HEK293 (cell line): ENCODE measurements at regions of chr16 and their contacts with region 1.

Region 1: DNA sequence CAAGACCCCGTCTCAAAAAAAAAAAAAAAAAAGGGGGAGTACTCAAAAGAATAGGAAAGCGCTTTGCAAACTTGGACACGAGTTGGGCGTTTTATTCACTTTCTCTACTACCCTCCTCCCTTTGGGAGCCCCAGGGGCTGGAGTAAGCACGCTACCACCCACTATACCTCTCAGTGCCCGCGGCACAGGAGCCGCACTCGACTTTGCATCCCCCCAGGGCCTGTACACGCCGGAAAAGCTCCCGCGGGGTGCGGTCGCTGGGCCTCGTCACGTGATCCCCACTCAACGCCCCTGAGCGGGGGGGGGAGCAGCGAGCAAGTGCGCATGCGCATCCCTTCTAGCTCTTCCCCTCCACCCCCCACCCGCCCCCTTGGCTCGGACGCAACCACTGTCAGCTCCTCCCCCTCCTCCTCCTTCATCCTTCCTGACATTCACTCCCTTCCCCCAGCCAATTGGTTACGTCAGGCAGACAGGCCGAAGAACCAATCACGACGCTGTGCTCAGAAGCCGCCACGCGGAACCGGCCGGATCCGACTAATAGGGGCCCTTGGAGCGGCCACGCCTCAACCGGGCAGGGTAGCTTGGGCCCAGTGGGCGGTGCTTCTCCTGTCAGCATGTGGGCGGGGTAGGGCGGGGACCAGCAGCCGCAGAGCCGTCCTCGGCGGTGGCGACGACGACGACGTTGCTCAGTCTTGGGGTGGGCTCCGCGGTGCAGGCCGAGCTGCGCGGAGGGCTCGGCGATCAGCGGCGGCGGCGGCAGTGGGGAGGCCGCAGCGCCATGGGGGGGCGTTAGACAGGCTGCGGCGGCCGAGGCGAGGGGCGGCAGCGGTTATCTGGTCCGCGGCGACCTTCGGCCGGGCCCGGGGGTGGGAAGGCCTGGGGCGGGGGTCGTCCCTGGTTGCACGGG is at the start of gene HAPSTR1:
- H3K4me3 ChIP-seq: peak within 1 kb of the TSS; percentile 99
- H3K27ac ChIP-seq: peak within 1 kb of the TSS; percentile 89
- H3K4me1 ChIP-seq: peaks cover 9% of the 10 kb centered on the region
- CTCF ChIP-seq: no peak

Region 2: DNA sequence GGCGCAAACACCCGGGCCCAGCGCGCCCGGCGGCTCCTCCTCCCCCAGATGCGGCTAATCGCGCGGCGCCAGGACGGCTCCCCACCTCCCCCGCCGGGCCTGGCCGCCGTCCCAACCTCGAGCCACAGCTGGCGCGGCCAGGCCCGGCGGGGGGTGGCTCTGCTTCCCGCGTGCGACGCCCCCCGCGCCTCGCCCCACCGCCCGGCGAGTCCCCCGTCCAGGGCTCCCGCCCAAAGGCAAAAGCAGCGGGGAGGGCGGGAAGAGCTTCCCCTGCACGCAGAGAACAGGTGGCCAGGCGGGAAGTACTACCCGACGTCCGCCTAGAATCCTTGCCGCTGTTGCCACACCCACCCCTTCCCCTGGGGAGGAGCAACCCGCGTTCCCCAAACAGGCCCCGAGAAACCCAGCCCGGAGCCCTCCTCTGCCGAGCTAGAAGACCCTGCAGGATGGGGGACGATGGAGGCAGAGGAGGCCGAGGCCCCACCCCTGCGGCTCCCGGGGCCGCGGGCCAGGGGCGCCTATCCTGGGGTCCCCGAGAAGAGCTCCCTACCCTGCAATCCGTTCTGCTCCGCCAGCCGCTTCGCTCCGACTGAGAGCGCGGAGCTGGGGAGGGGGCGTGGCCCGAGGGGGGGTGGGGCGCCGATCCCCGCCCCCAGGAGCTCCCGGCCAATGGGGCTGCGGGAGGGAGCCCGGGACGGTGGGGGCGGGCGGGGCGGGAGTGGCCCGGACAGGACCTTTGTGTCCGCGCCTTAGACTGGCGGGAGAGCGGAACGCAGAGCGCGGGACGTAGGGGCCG is 222.6 kb before region 1 on chr16 and contains the start of gene CARHSP1:
- CTCF ChIA-PET with region 1: no interaction called
- POLR2A ChIA-PET with region 1: interaction called, 12 read pairs
- H3K4me3 ChIP-seq: peak within 1 kb of the TSS; percentile 75
- H3K27ac ChIP-seq: peak within 1 kb of the TSS; percentile 90
- H3K4me1 ChIP-seq: peaks cover 11% of the 10 kb centered on the region
- CTCF ChIP-seq: no peak

Region 3: DNA sequence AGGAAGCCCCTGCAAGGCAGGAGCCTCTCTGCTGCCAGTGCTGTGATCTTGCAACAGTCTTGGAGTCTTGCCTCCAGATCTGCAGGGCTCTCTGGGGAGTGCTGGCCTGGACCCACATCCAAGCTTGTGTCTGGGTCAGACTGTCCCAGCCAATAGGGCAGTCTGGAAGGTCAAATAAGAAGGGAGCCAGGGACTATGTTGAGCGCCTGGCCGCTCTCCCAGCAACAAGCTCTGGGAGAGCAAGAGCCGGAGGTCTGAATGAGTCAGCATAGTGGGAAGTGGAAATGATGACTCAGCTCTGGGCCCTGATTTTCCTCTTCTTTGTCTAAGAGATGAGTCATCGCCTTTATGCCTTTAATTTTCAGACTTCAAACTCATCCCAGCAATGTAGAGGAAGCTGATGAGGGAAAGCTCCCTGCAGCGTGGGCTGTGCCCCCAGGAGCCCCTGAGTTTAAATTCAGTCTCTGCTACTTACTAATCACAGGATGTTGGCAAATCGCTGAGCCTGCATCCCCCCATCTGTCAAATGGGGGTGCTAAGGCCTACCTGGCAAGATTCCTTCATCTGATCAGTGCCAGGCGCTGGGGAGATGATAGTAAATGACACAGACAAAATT is 43.4 kb before region 1 on chr16:
- CTCF ChIA-PET with region 1: interaction called, 8 read pairs
- POLR2A ChIA-PET with region 1: interaction called, 11 read pairs
- H3K4me3 ChIP-seq: no peak overlapping the region
- H3K27ac ChIP-seq: no peak overlapping the region; the same call in 1 of the 2 replicates
- H3K4me1 ChIP-seq: peaks cover 6% of the 10 kb centered on the region
- CTCF ChIP-seq: no peak

Region 4: DNA sequence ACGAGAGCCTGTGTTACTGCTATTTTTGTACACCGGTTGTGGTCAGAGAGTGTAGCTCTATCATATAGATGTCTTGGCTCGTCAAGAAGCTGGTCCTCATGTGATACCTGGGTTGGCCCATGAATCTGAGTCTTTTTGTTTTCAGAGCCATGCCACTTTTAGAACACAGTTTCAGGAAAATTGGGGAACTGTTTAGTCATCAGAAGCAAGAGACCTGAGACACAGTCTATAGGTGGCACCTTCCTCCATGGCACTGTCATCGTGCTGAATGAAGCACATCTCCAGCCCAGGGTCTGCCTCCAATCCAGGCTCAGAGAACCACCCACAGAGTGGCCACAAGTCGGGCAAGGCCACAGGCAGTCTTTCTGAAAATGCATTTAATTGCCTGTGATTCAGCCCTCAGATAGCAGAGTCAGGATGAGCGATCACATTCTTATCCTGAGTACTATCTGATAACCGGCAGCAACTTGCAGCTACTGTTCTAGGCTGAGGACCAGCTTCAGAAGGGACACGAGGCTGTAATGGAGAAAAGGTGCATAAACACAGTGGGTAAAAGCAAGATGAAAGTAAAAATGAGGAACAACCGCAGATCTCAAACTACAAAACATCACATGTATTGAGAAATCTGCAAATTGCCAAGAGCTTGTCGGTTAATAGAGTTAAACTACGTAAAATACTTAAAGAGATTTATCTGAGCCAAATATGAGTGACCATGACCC is 14.0 kb before region 1 on chr16:
- CTCF ChIA-PET with region 1: no interaction called
- POLR2A ChIA-PET with region 1: interaction called, 76 read pairs
- H3K4me3 ChIP-seq: no peak overlapping the region
- H3K27ac ChIP-seq: no peak overlapping the region
- H3K4me1 ChIP-seq: no peaks in the 10 kb centered on the region
- CTCF ChIP-seq: no peak

Region 5: DNA sequence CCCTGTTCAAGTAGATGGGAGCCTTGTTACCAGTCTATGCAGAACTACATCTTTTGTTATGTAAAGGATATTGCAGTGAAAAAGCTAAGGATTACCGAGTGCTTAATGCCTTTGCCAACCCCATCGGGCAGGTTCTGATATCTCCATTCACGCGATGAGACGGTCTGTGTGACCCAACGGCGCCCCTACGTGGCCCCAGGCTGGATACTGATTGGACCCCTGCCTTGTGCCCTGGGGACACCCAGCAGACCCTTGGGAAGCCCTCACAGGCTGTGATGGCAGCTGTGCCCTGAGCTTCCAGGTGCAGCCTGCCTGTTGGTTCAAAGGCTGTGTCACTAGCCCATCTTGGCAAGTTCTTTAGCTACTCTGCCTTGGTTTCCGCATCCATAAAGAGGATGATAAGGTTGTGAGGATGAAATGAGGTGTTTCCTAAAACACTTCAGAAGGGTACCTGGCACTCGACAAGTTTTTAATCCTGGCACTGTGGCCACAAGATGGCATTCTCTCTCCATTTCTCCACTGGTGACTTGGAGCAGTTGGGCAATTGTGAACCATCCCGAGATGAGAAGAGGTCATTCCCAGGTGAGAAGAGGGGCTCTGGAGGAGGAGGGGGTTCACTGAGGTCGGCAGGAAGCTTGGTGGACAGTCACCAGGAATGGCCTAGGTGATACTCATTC is 33.8 kb after region 1 on chr16:
- CTCF ChIA-PET with region 1: no interaction called
- POLR2A ChIA-PET with region 1: interaction called, 12 read pairs
- H3K4me3 ChIP-seq: no peak overlapping the region
- H3K27ac ChIP-seq: no peak overlapping the region
- H3K4me1 ChIP-seq: no peaks in the 10 kb centered on the region
- CTCF ChIP-seq: no peak

Region 6: GRCh38 chr16:9159839-9160550 is 68.8 kb after region 1 on chr16:
- CTCF ChIA-PET with region 1: no interaction called
- POLR2A ChIA-PET with region 1: no interaction called
- H3K4me3 ChIP-seq: no peak overlapping the region
- H3K27ac ChIP-seq: no peak overlapping the region
- H3K4me1 ChIP-seq: no peaks in the 10 kb centered on the region
- CTCF ChIP-seq: peak; percentile 76